ENCODE measurements at regions of chr22 and their contacts with region 1.

Region 1: GRCh38 chr22:29727131-29727523 is 7.3 kb downstream of the CABP7 start:
- DNase-seq: peak; percentile 54
- ATAC-seq: peak; percentile 44
- H3K4me3 Mint-ChIP-seq: no peak overlapping the region
- H3K27ac Mint-ChIP-seq: no peak overlapping the region
- H3K4me1 Mint-ChIP-seq: no peaks in the 10 kb centered on the region
- H3K27me3 Mint-ChIP-seq: no peaks in the 10 kb centered on the region

Region 2: DNA sequence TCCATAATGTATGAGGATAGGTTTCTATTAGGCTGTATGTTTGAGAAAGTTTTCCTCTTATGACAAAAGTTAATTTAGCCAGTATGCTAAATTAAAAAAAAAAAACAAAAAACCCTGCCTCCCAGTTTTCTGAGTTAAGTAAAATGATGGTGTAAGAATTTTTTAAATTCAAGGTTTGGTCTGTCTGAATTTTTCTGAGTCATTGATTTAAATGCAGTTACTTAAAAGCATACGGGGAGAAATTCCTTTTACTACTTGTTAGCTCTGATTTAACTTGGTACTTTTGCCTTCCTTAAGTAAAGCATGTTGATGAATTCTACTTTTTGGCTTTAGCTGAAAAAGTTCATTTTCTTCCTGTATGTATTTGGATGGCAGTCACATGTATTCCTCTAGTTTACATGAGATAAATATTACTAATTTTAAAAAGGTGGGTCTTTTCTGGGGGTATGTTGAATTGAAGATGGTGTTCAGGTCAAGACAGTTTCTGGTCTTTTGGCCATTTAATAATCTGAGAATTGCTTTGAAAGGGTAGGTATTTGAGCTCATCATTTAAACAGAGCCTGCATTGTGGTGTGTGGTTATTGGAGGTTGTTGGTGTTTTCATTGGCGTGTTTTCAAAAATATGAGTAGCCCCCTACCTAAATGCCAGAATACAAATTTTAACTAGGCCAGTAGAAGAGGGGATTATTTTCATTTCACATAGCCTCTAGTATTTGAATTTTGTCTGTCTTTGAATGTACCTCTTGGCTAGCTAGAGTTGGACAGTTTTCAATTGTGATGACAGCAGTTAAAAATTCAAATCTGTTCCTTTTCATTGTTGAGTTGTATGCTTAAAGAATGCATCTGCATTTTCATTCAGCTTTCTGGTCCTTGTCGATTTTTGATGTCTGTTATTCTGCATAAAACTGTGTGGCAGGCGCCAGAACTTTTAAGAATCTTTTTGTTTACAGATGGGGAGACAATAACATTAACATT is 220.6 kb after region 1 on chr22:
- CTCF ChIA-PET with region 1: no interaction called
- POLR2A ChIA-PET with region 1: no interaction called
- intact Hi-C with region 1: no loop called
- DNase-seq: no peak
- ATAC-seq: no peak
- H3K4me3 Mint-ChIP-seq: no peak overlapping the region
- H3K27ac Mint-ChIP-seq: no peak overlapping the region
- H3K4me1 Mint-ChIP-seq: peaks cover 57% of the 10 kb centered on the region
- H3K27me3 Mint-ChIP-seq: no peaks in the 10 kb centered on the region

Region 3: GRCh38 chr22:30079952-30080533 is 352.9 kb after region 1 on chr22 and contains the start of gene HORMAD2:
- CTCF ChIA-PET with region 1: no interaction called
- POLR2A ChIA-PET with region 1: interaction called, 4 read pairs
- intact Hi-C with region 1: loop called in 1 of 2 experiments (anchors 10 kb)
- DNase-seq: peak; percentile 12
- ATAC-seq: no peak
- H3K4me3 Mint-ChIP-seq: no peak within 1 kb of the TSS
- H3K27ac Mint-ChIP-seq: no peak within 1 kb of the TSS
- H3K4me1 Mint-ChIP-seq: peaks cover 14% of the 10 kb centered on the region
- H3K27me3 Mint-ChIP-seq: peaks cover 3% of the 10 kb centered on the region
- total RNA-seq, gene HORMAD2: not detected

Measured in activated CD4-positive, alpha-beta T cell treated with anti-CD3 and anti-CD28 coated beads for 36 hours (primary cell).